Activated CD4-positive, alpha-beta T cell treated with anti-CD3 and anti-CD28 coated beads, Interleukin-2, amount 10 ng/mL, durations not matched to agents 24 days and 14 days (primary cell): ENCODE measurements at regions of chr9 and their contacts with region 1.

Region 1: DNA sequence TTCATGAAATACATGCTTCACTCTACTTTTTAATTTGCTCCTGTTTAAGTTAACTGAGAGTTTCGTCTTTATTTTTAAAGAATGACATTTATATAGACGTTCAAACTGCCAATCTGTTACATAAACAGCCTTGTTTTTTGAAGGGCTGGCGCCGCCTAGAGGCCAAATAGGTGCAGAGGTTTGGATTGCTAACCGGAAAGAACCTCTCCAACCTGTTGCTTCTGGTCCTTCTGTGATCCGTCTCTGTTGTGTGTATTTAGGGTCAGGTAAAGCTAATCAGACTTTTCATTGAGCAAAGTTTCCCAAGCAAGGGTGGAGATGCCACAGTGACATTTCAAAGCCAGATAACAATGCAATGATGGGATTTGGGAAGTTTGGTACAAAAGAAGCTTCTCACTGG is 39.5 kb upstream of the GLIS3 start:
- DNase-seq: peak; percentile 93
- H3K4me3 Mint-ChIP-seq: peak overlapping the region; percentile 46
- H3K27ac Mint-ChIP-seq: peak overlapping the region; percentile 56
- H3K4me1 Mint-ChIP-seq: peaks cover 5% of the 10 kb centered on the region
- H3K27me3 Mint-ChIP-seq: no peaks in the 10 kb centered on the region

Region 2: DNA sequence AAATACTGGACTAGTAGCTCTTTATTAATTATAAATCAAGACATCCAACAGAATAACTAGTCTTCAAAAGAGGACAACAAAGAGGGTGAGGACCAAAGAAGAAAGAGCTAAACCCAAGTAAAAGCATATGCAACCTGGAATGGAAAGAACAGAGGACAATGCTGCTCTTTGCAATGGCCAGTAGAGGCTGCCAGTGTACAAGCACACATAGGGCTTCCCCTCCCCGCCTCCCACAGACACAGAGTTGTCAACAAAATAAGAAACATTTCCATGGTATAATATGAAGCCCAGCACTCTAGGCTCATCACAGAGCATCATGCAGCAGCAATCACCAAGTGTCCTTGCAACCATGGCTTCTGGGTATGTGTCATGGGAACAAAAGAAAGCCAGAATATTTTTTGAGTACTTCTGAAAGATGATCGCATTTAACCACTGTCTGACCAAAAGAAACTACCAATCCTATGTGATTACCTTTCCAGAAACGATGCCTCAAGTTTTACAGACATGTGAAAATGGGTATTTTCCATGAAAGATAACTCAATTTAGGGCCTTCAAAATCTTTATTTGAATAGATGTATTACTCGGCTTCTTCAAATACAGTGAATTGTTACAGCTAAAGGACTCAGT is 871.7 kb before region 1 on chr9:
- intact Hi-C with region 1: loop called (anchors 10 kb)
- DNase-seq: peak; percentile 86
- H3K4me3 Mint-ChIP-seq: no peak overlapping the region
- H3K27ac Mint-ChIP-seq: no peak overlapping the region
- H3K4me1 Mint-ChIP-seq: peaks cover 4% of the 10 kb centered on the region
- H3K27me3 Mint-ChIP-seq: no peaks in the 10 kb centered on the region

Region 3: DNA sequence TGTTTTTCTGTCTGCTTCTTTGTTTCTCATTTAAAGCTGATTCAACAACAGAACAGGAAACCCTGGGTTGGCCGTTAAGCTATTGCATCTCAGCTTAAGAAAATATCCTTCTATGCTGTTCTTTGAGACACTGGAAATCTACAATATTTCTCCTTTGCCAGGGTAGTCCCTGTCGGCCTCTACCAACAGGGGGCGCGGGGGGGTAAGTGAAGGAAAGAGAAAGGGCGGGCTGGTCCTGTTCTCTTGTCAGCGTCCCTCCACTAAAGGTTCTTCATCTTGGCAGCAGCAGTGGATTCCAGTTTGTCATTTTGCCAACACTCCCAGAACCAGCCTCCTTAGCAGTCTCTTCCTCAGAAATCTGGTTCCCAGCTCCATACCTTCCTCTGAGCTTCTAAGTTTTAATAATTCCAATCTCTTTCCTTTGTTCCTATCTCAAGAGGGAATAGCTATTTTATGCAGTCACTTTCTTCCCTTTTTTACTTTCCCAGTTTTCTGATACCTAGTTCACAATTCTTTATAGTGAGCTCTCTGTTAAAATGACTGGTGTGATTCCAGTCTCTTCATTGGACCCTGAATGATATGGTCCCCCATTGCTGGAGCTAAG is 261.8 kb before region 1 on chr9:
- intact Hi-C with region 1: loop called (anchors 2 kb)
- DNase-seq: peak; percentile 78
- H3K4me3 Mint-ChIP-seq: no peak overlapping the region
- H3K27ac Mint-ChIP-seq: no peak overlapping the region
- H3K4me1 Mint-ChIP-seq: no peaks in the 10 kb centered on the region
- H3K27me3 Mint-ChIP-seq: peaks cover 3% of the 10 kb centered on the region

Region 4: GRCh38 chr9:4228606-4229005 is 110.8 kb before region 1 on chr9:
- intact Hi-C with region 1: loop called (anchors 5 kb)
- DNase-seq: no peak
- H3K4me3 Mint-ChIP-seq: no peak overlapping the region
- H3K27ac Mint-ChIP-seq: no peak overlapping the region
- H3K4me1 Mint-ChIP-seq: peaks cover 3% of the 10 kb centered on the region
- H3K27me3 Mint-ChIP-seq: peaks cover 2% of the 10 kb centered on the region

Region 5: GRCh38 chr9:4306066-4306775 is 33.1 kb before region 1 on chr9:
- intact Hi-C with region 1: loop called (anchors 2 kb)
- DNase-seq: peak; percentile 67
- H3K4me3 Mint-ChIP-seq: peak overlapping the region; percentile 60
- H3K27ac Mint-ChIP-seq: peak overlapping the region; percentile 83
- H3K4me1 Mint-ChIP-seq: peaks cover 52% of the 10 kb centered on the region
- H3K27me3 Mint-ChIP-seq: peaks cover 16% of the 10 kb centered on the region

Region 6: GRCh38 chr9:4315582-4316215 is 23.7 kb before region 1 on chr9:
- intact Hi-C with region 1: loop called (anchors 1 kb)
- DNase-seq: peak; percentile 90
- H3K4me3 Mint-ChIP-seq: no peak overlapping the region
- H3K27ac Mint-ChIP-seq: no peak overlapping the region
- H3K4me1 Mint-ChIP-seq: peaks cover 2% of the 10 kb centered on the region
- H3K27me3 Mint-ChIP-seq: peaks cover 10% of the 10 kb centered on the region